Aorta (tissue), 5 donors: ENCODE measurements at regions of chrX and their contacts with region 1.

Region 1: GRCh38 chrX:103845165-103845653 is 13.2 kb upstream of the RAB9B start:
- DNase-seq: peak; percentile 67 to 83
- ATAC-seq: peak; percentile 82
- H3K4me3 ChIP-seq: no peak overlapping the region
- H3K27ac ChIP-seq: no peak overlapping the region
- H3K4me1 ChIP-seq: no peaks in the 10 kb centered on the region
- H3K27me3 ChIP-seq: no peaks in the 10 kb centered on the region

Region 2: GRCh38 chrX:103941201-103941975 is 96.2 kb after region 1 on chrX:
- intact Hi-C with region 1: no loop called
- DNase-seq: no peak
- ATAC-seq: no peak
- H3K4me3 ChIP-seq: no peak overlapping the region
- H3K27ac ChIP-seq: no peak overlapping the region
- H3K4me1 ChIP-seq: no peaks in the 10 kb centered on the region
- H3K27me3 ChIP-seq: no peaks in the 10 kb centered on the region

Region 3: GRCh38 chrX:104130808-104131207 is 285.6 kb after region 1 on chrX:
- intact Hi-C with region 1: loop called (anchors 5 to 10 kb)
- DNase-seq: no peak
- ATAC-seq: no peak
- H3K4me3 ChIP-seq: no peak overlapping the region
- H3K27ac ChIP-seq: no peak overlapping the region
- H3K4me1 ChIP-seq: peaks cover 1 to 2% of the 10 kb centered on the region in 2 donors
- H3K27me3 ChIP-seq: no peaks in the 10 kb centered on the region

Region 4: GRCh38 chrX:104136241-104137019 is 291.2 kb after region 1 on chrX:
- intact Hi-C with region 1: loop called (anchors 5 to 10 kb)
- DNase-seq: peak in 1 of 2 donors; percentile 70
- ATAC-seq: peak; percentile 89
- H3K4me3 ChIP-seq: peak overlapping the region; percentile 59 to 64
- H3K27ac ChIP-seq: peak overlapping the region in 1 of 2 donors; percentile 75
- H3K4me1 ChIP-seq: peaks cover 0 to 2% of the 10 kb centered on the region in 2 donors
- H3K27me3 ChIP-seq: no peaks in the 10 kb centered on the region